Mammary epithelial cell (primary cell): ENCODE measurements at regions of chr3 and their contacts with region 1.

Region 1: DNA sequence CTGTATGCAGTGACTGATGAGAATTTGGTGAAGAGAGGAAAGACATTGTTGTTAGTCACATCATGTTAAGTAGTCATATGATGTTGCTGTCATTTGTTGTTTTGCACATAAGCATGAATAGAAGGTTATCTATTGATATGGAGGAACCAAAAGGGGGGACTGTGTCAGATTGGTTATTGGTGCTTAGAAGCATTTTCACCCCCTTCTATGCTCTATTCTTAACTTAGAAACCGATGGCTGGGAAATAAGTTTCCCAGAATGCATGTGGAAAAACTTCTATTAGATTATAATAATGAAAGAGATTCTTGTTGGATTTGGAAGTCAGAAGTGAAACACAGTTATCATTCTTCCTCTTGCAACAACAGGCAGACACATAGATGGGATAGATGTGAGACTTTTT is 33.2 kb upstream of the CADM2 start:
- DNase-seq: no peak
- H3K4me3 ChIP-seq: no peak overlapping the region
- H3K27ac ChIP-seq: no peak overlapping the region
- H3K4me1 ChIP-seq: no peaks in the 10 kb centered on the region
- H3K27me3 ChIP-seq: no peaks in the 10 kb centered on the region
- CTCF ChIP-seq: no peak

Region 2: DNA sequence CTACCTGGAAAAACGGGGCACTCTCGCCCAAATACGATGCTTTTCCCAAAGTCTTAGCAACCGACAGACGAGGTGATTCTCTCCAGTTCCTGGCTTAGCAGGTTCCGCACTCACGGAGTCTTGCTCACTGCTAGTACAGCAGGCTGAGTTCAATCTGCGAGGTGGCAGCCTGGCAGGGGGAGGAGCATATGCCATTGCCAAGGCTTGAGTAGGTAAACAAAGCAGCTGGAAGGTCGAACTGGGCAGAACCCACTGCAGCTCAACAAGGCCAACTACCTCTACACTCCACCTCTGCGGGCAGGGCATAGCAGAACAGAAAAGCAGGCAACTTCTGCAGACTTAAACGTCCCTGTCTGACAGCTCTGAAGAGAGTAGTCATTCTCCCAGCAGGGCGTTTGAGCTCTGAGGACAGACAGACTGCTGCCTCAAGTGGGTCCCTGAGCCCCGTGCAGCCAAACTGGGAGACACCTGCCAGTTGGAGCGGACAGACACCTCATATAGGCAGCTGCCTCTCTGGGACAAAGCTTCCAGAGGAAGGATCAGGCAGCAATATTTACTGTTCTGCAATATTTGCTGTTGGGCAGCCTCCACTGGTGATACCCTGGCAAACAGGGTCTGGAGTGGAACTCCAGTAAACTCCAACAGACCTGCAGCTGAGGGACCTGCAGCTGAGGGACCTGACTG is 40.2 kb before region 1 on chr3:
- CTCF ChIA-PET with region 1: no interaction called
- dilution Hi-C with region 1: loop called (anchors 5 kb)
- in situ Hi-C with region 1: no loop called
- intact Hi-C with region 1: no loop called
- DNase-seq: no peak
- H3K4me3 ChIP-seq: no peak overlapping the region
- H3K27ac ChIP-seq: no peak overlapping the region
- H3K4me1 ChIP-seq: no peaks in the 10 kb centered on the region
- H3K27me3 ChIP-seq: no peaks in the 10 kb centered on the region
- CTCF ChIP-seq: no peak

Region 3: DNA sequence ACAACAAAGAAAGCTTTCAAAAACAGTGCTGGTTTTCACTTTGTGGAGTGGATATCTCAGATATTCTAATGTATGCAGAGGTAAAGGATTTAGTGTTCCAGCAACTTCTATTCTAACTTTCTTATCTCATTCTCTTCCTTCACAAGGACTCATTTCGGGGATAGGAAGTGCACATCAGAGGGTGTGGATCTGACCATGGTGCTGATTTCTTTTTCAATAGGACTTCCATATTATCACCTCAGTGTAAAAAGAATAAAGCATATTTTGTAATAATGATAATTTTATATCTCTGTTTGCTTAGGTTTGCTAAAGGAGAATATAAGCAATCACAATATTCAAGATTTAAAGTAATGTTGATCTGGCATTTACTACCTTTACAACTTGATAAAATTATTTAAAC is 20.7 kb after region 1 on chr3:
- CTCF ChIA-PET with region 1: no interaction called
- dilution Hi-C with region 1: no loop called
- in situ Hi-C with region 1: no loop called
- intact Hi-C with region 1: no loop called
- DNase-seq: no peak
- H3K4me3 ChIP-seq: no peak overlapping the region
- H3K27ac ChIP-seq: no peak overlapping the region
- H3K4me1 ChIP-seq: no peaks in the 10 kb centered on the region
- H3K27me3 ChIP-seq: no peaks in the 10 kb centered on the region
- CTCF ChIP-seq: no peak